SK-N-SH (cell line): ENCODE measurements at regions of chr16 and their contacts with region 1.

Region 1: GRCh38 chr16:49592546-49593423 is 219.2 kb downstream of the C16orf78 start:
- DNase-seq: peak; percentile 79
- H3K4me3 ChIP-seq: no peak overlapping the region; a peak in 1 of 4 replicates
- H3K27ac ChIP-seq: peak overlapping the region in 1 of 2 experiments; percentile 66; a peak in 2 of 4 replicates
- H3K4me1 ChIP-seq: peaks cover 11 to 67% of the 10 kb centered on the region in 2 experiments; a peak in 3 of 4 replicates
- H3K27me3 ChIP-seq: no peaks in the 10 kb centered on the region
- CTCF ChIP-seq: peak; percentile 81
- EP300 ChIP-seq: no peak
- RAD21 ChIP-seq: peak; percentile 68

Region 2: DNA sequence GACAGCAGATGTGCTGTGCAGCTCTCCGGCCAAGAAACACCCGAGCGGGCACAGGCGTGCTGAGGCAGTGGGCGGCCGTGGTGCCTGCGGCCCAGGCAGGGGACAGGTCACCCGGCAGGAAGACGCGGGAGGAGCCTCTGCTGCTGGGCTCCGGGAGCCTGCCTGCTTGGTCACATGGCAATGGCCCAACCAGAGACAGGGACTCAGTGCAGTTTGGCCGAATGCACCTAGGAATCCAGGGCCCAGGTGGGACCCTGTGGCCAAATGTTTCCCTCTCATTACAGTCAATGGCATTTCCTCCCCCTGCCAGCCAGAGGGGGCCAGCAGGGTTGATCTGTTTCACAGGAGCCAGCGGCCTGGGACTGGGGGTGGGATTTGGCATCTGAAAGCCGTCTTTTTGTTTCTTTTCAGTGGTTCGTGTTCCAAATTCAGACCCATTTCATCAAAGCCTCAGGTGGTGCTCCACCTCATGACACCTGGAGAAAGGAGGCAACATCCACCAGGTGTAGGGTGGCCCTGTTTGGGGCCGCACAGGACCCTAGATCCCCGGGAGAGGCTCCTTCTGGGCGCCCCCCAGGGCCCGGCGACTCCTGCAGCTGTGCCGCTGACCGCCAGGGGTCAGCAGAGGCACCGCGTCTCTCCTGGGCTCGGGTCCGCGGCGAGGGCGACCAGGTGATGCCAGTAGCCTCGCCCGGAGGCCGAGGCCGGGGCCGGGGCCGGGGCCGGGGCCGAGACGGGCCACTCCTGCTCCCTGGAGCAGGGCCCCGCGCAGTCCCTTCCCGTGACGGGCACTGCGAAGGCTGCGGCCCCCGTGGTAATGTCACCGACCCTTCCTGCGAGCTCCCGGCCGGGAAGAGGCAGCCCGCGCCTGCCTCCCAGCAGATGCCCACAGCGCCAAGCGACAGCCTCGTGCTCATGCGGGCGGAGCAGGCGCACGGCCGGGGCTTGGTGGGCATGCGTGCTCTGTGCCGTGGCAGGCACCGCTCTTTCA is 100.7 kb before region 1 on chr16:
- CTCF ChIA-PET with region 1: interaction called, 20 read pairs
- POLR2A ChIA-PET with region 1: no interaction called
- DNase-seq: peak; percentile 94
- H3K4me3 ChIP-seq: peak overlapping the region in 1 of 2 experiments; percentile 26; a peak in 1 of 4 replicates
- H3K27ac ChIP-seq: no peak overlapping the region; a peak in 1 of 4 replicates
- H3K4me1 ChIP-seq: peaks cover 0 to 23% of the 10 kb centered on the region in 2 experiments; a peak in 1 of 4 replicates
- H3K27me3 ChIP-seq: no peaks in the 10 kb centered on the region
- CTCF ChIP-seq: peak; percentile 84
- EP300 ChIP-seq: no peak
- RAD21 ChIP-seq: peak; percentile 61

Region 3: DNA sequence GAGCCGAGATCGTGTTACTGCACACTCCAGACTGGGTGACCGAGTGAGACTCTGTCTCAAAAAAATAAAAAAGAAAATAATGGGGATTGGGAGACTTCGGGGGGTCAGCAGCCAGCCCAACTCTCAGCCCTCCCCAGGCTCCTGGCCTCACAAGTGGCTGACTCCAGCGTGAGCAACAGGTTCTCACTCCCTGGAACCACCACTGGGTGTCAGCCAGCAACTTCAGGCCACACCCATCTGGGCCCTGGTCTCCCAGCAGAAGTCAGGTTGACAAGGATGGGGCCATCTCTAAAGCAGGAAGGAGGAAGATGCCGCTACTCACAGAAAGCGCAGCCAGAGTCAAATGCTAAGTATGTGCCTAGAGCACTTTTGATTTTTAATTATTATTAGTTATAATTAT is 79.7 kb before region 1 on chr16:
- CTCF ChIA-PET with region 1: interaction called, 13 read pairs
- POLR2A ChIA-PET with region 1: no interaction called
- DNase-seq: peak; percentile 63
- H3K4me3 ChIP-seq: no peak overlapping the region
- H3K27ac ChIP-seq: no peak overlapping the region
- H3K4me1 ChIP-seq: peaks cover 0 to 28% of the 10 kb centered on the region in 2 experiments; a peak in 1 of 4 replicates
- H3K27me3 ChIP-seq: no peaks in the 10 kb centered on the region
- CTCF ChIP-seq: peak; percentile 11; the same call in 1 of the 2 replicates
- EP300 ChIP-seq: no peak
- RAD21 ChIP-seq: peak; percentile 54

Region 4: DNA sequence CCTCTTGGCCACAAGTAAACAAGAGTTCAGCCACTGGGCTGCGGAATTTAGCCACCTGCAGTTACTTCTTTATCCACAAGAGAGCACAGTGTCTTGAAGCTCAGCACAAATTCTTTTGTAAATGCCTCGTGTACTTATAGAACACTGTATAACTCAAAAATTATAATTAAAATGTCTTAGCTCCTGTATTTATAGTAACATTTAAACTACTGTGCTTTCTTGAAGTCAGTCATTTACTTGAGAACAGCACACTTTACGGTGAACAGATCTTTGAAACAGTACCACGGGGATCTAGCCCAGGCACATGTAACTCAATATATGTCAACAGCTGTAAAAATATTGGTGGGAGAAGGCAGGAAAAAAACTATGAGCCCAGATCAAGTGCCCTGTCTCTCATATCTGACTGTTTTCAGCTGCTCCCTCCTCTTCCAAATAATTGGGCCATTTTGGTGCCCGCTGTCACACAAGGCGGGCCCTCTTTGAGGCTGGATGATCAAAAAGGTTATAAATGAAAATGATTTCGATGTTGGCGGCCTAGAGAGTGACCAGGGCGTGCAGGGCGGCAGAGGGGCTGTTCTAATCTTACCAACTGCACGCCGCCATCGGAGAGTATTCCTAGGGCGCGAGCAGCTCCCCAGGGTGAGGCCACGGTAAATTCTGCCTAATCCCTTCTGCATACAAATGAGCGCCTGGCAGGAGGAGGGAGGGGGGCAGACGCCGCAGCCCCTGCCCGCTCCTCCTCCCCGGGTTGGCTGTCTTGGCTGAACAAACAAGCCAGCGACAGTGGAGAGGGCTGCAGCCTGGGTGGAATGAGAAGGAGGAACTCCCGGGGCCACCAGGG is 36.0 kb before region 1 on chr16:
- CTCF ChIA-PET with region 1: interaction called, 27 read pairs
- POLR2A ChIA-PET with region 1: interaction called, 3 read pairs
- DNase-seq: no peak
- H3K4me3 ChIP-seq: no peak overlapping the region; a peak in 1 of 4 replicates
- H3K27ac ChIP-seq: peak overlapping the region in 1 of 2 experiments; percentile 11; a peak in 1 of 4 replicates
- H3K4me1 ChIP-seq: peaks cover 0 to 34% of the 10 kb centered on the region in 2 experiments; a peak in 3 of 4 replicates
- H3K27me3 ChIP-seq: peaks cover 4% of the 10 kb centered on the region; the same call in 1 of the 2 replicates
- CTCF ChIP-seq: peak; percentile 62
- EP300 ChIP-seq: no peak
- RAD21 ChIP-seq: peak; percentile 55

Region 5: GRCh38 chr16:49580751-49581303 is 12.0 kb before region 1 on chr16:
- CTCF ChIA-PET with region 1: interaction called, 42 read pairs
- POLR2A ChIA-PET with region 1: no interaction called
- DNase-seq: no peak
- H3K4me3 ChIP-seq: no peak overlapping the region
- H3K27ac ChIP-seq: no peak overlapping the region; a peak in 1 of 4 replicates
- H3K4me1 ChIP-seq: peaks cover 0 to 39% of the 10 kb centered on the region in 2 experiments; a peak in 1 of 4 replicates
- H3K27me3 ChIP-seq: no peaks in the 10 kb centered on the region
- CTCF ChIP-seq: no peak
- EP300 ChIP-seq: no peak
- RAD21 ChIP-seq: no peak

Region 6: GRCh38 chr16:49652456-49653172 is 59.8 kb after region 1 on chr16:
- CTCF ChIA-PET with region 1: interaction called, 19 read pairs
- POLR2A ChIA-PET with region 1: interaction called, 3 read pairs
- DNase-seq: no peak
- H3K4me3 ChIP-seq: peak overlapping the region in 1 of 2 experiments; percentile 51; a peak in 3 of 4 replicates
- H3K27ac ChIP-seq: peak overlapping the region; percentile 52 to 92; a peak in 3 of 4 replicates
- H3K4me1 ChIP-seq: peaks cover 6 to 55% of the 10 kb centered on the region in 2 experiments; a peak in 3 of 4 replicates
- H3K27me3 ChIP-seq: no peaks in the 10 kb centered on the region
- CTCF ChIP-seq: no peak
- EP300 ChIP-seq: no peak
- RAD21 ChIP-seq: no peak

Region 7: DNA sequence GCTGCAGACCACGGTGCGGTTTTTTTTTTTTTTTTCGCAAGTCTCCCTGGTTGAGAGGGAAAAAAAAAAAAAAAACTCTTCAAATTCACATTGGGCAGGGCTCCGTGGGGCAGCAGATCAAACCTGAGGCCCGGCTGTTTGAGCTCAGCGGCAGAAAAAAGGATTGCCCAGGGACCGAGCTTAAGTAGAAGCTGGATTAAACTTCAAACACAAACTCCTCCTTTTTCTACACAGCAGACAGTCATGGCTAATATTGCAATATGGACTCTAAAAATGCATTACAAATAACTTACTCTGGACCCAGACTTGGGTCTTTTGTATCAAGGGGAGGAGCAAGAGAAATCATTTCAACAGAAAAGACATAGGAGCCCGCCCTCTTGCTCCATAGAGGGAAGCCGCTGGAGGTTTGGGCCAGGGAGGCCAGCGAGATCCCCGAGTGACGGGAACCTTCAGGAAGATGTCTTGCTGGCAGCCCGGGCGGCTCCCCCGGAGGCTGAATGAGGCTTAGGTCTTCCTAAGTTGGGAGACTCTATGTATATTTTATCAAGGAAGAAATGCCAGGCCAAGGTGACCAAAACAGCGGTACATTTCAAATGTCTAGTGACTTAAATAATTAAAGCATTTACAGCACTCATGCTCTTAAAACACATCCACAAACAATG is 95.4 kb after region 1 on chr16:
- CTCF ChIA-PET with region 1: no interaction called
- POLR2A ChIA-PET with region 1: no interaction called
- DNase-seq: no peak
- H3K4me3 ChIP-seq: no peak overlapping the region
- H3K27ac ChIP-seq: no peak overlapping the region
- H3K4me1 ChIP-seq: peaks cover 0 to 13% of the 10 kb centered on the region in 2 experiments; a peak in 1 of 4 replicates
- H3K27me3 ChIP-seq: no peaks in the 10 kb centered on the region
- CTCF ChIP-seq: no peak; the same call in 1 of the 2 replicates
- EP300 ChIP-seq: no peak
- RAD21 ChIP-seq: no peak